MCF 10A (cell line): ENCODE measurements at regions of chr4 and their contacts with region 1.

Region 1: DNA sequence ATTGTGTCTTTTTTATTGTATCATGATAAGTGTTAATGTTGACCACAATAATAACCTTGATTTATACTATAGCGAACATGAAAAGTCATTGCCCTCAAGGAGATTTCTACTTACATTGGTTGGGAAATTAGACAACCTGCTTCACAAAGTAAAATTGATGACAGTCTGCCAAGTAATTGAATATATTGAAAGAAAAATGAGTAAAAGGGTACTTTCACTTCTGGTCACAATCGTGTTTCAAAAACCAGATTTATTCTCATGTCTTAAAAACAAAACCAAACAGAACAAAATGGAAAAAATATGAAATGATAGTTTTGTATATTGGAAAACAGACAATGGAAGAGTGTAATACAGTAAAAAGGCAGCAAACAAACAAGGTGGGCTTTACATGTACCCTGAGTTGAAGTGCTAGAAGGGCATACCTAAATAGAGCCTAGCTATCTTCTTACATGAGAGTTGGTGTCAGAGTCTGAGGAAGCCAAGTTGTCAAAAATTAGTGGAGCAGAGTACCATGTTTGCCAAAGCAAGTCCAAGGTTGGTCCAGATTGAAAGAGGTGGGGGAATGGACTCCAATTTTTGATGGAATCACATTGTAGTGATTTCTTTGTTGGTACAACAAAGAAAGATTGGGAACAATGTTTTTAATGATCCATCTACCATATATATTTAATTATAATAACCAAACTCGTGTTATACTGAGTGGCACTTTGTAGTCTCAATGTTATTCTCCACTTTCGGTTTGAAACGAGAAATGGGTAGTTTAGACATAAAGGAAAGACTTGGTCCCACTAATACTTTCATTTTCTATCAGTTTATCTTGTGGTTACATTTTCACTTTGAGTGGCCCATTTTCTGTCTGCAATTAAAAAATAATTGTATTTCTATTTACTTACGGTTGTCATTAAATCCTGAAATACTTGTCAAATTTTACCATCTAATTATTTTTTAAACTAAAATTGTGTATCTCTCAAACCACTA is 775.6 kb downstream of the STIM2 start:
- DNase-seq: no peak
- H3K4me3 Mint-ChIP-seq: no peak overlapping the region
- H3K27ac Mint-ChIP-seq: no peak overlapping the region
- H3K4me1 Mint-ChIP-seq: no peaks in the 10 kb centered on the region
- H3K27me3 Mint-ChIP-seq: no peaks in the 10 kb centered on the region
- CTCF ChIP-seq: no peak

Region 2: DNA sequence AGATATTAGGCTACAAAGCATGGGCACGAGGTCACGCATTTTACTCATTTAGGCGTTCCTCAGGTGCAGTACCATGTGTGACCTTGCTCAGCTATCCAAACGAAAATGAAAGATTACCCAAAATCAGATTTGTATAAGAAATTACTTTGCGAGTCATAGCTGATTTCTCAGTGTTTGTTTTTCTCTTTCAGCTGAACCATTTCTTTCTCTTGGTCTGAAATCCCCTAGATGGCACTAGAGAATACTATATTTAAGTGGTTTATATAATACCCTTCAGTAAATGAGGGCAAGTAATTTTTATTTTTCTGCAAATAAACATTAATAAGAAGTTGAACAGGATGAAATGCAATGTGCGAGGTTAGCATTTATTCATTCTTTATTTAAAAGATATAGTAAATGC is 278.9 kb before region 1 on chr4:
- CTCF ChIA-PET with region 1: interaction called, 5 read pairs
- POLR2A ChIA-PET with region 1: no interaction called
- intact Hi-C with region 1: loop called (anchors 1 kb)
- DNase-seq: peak; percentile 30
- H3K4me3 Mint-ChIP-seq: no peak overlapping the region
- H3K27ac Mint-ChIP-seq: no peak overlapping the region
- H3K4me1 Mint-ChIP-seq: peaks cover 10% of the 10 kb centered on the region
- H3K27me3 Mint-ChIP-seq: no peaks in the 10 kb centered on the region
- CTCF ChIP-seq: peak; percentile 32

Region 3: DNA sequence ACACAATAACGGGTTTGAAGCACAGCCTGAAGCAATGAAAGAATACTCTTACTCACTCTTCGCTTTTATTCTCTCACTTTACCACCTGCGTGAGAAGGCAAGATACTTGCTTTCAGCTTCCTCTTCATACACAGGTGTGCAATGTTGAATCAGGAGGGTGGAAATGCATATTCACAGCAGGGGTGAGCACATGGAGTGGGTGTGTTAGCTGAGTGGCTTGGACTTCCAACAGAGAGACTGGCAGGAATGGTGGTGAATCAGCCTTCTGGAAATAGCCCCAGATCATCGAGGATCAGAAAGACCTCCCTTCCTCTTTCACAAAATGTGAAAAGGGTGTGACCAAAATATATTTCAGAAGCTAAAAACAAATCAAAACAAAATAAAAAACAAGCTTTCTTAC is 254.4 kb before region 1 on chr4:
- CTCF ChIA-PET with region 1: no interaction called
- POLR2A ChIA-PET with region 1: no interaction called
- intact Hi-C with region 1: no loop called
- DNase-seq: peak; percentile 69
- H3K4me3 Mint-ChIP-seq: no peak overlapping the region
- H3K27ac Mint-ChIP-seq: no peak overlapping the region
- H3K4me1 Mint-ChIP-seq: peaks cover 10% of the 10 kb centered on the region
- H3K27me3 Mint-ChIP-seq: no peaks in the 10 kb centered on the region
- CTCF ChIP-seq: no peak

Region 4: GRCh38 chr4:27412613-27413012 is 223.6 kb before region 1 on chr4:
- CTCF ChIA-PET with region 1: no interaction called
- POLR2A ChIA-PET with region 1: no interaction called
- intact Hi-C with region 1: loop called (anchors 2 kb)
- DNase-seq: peak; percentile 20
- H3K4me3 Mint-ChIP-seq: no peak overlapping the region
- H3K27ac Mint-ChIP-seq: no peak overlapping the region
- H3K4me1 Mint-ChIP-seq: no peaks in the 10 kb centered on the region
- H3K27me3 Mint-ChIP-seq: no peaks in the 10 kb centered on the region
- CTCF ChIP-seq: no peak